A673 (cell line): ENCODE measurements at regions of chr18 and their contacts with region 1.

Region 1: GRCh38 chr18:11688989-11689668 is at the start of gene GNAL:
- DNase-seq: peak; percentile 80
- H3K4me3 ChIP-seq: peak within 1 kb of the TSS; percentile 42
- H3K27ac ChIP-seq: no peak within 1 kb of the TSS
- H3K4me1 ChIP-seq: peaks cover 9% of the 10 kb centered on the region
- H3K27me3 ChIP-seq: peaks cover 56% of the 10 kb centered on the region
- CTCF ChIP-seq: no peak
- total RNA-seq, gene GNAL: 0.06 and 0.15 TPM in 2 replicates

Region 2: GRCh38 chr18:9916065-9916684 is 1773.0 kb before region 1 on chr18:
- CTCF ChIA-PET with region 1: no interaction called
- POLR2A ChIA-PET with region 1: interaction called, 20 read pairs
- intact Hi-C with region 1: no loop called
- DNase-seq: no peak
- H3K4me3 ChIP-seq: peak overlapping the region; percentile 93
- H3K27ac ChIP-seq: no peak overlapping the region
- H3K4me1 ChIP-seq: peaks cover 45% of the 10 kb centered on the region
- H3K27me3 ChIP-seq: no peaks in the 10 kb centered on the region
- CTCF ChIP-seq: no peak

Region 3: GRCh38 chr18:12851716-12852115 is 1162.6 kb after region 1 on chr18:
- CTCF ChIA-PET with region 1: no interaction called
- POLR2A ChIA-PET with region 1: no interaction called
- intact Hi-C with region 1: no loop called
- DNase-seq: no peak
- H3K4me3 ChIP-seq: no peak overlapping the region
- H3K27ac ChIP-seq: no peak overlapping the region
- H3K4me1 ChIP-seq: no peaks in the 10 kb centered on the region
- H3K27me3 ChIP-seq: no peaks in the 10 kb centered on the region
- CTCF ChIP-seq: no peak